ENCODE measurements at regions of chr20 and their contacts with region 1.

Region 1: GRCh38 chr20:43694763-43695162 is 27.8 kb downstream of the MYBL2 start:
- DNase-seq: no peak
- H3K4me3 ChIP-seq: no peak overlapping the region
- H3K27ac ChIP-seq: no peak overlapping the region
- H3K4me1 ChIP-seq: no peaks in the 10 kb centered on the region
- H3K27me3 ChIP-seq: no peaks in the 10 kb centered on the region
- CTCF ChIP-seq: no peak
- POLR2A ChIP-seq: no peak

Region 2: GRCh38 chr20:43416079-43416478 is 278.7 kb before region 1 on chr20:
- intact Hi-C with region 1: no loop called
- DNase-seq: no peak
- H3K4me3 ChIP-seq: no peak overlapping the region
- H3K27ac ChIP-seq: no peak overlapping the region
- H3K4me1 ChIP-seq: no peaks in the 10 kb centered on the region
- H3K27me3 ChIP-seq: no peaks in the 10 kb centered on the region
- CTCF ChIP-seq: no peak
- POLR2A ChIP-seq: no peak

Region 3: DNA sequence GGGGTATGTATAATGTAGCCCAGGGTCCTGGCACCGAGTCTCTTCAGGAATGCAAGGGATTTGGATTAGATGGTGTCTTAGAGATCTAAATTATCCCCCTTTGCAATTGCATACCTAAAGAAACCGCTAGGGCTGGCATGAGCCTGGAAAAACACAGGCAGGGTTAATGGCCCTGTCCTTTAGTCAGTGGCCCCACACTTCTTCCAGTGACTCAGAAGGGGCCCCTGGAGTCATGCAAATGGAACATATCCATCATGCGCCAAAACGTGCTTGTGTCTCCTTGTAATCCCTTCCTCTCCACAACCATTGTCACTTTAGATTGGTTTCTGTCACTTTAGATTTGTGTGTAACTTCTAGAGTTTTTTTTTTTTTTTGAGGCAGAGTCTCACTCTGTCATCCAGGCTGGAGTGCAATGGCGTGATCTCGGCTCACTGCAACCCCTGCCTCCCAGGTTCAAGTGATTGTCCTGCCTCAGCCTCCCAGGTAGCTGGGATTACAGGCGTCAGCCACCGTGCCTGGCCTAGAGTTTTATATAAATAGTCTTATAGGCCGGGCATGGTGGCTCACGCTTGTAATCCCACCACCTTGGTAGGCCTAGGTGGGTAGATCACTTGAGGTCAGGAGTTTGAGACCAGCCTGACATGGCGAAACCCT is 36.6 kb before region 1 on chr20:
- intact Hi-C with region 1: no loop called
- DNase-seq: no peak
- H3K4me3 ChIP-seq: peak overlapping the region; percentile 59 to 72 (median 69)
- H3K27ac ChIP-seq: peak overlapping the region; percentile 77 to 89
- H3K4me1 ChIP-seq: no peaks in the 10 kb centered on the region
- H3K27me3 ChIP-seq: no peaks in the 10 kb centered on the region
- CTCF ChIP-seq: no peak
- POLR2A ChIP-seq: no peak

Region 4: DNA sequence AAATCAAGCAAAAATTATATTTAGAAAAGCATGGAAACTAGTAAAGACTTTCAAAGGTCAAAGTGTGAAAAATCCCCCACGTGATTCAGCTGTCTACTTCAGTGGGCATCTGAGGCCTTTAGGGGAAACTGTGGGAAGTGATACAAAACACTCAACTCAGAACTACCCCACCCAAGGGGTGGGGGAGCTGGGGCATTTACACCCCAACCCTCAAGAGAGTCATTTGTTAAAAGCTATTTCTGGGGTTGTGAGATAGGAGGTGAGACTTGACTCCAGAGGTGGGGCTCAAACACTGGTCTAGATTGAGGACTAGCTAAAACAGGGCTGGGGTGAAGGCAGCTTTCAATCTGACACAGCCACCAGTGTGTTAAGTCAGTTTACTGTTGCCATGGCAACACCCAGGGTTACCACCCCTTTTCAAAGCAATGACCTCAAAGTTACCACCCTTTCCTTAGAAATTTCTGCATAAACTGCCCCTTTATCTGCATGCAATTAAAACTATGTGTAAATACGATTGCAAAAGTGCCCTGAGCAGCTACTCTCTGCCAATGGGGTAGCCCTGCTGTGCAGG is 41.9 kb after region 1 on chr20:
- intact Hi-C with region 1: loop called (anchors 2 kb)
- DNase-seq: no peak
- H3K4me3 ChIP-seq: no peak overlapping the region
- H3K27ac ChIP-seq: no peak overlapping the region
- H3K4me1 ChIP-seq: no peaks in the 10 kb centered on the region
- H3K27me3 ChIP-seq: peaks cover 0 to 3% of the 10 kb centered on the region in 2 donors
- CTCF ChIP-seq: no peak
- POLR2A ChIP-seq: no peak

Region 5: DNA sequence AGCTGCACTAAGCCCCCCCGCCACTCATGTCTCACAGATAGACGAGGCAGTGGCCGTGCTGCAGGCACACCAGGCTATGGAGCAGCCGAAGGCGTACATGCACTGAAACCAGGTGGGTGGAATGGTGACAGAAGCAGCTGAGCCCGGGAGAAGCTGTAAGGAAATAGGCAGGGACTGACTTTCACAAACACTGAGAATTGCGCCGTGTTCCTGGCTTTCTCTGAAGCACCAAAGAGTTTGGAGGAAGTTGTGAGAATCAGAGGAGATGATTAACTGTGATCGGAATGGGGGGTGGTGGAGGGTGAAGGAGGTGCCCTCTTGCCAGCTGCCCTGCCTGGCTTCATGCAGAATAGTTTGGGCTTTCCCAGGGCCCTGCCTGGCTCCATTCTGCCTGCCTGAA is 1243.9 kb after region 1 on chr20:
- intact Hi-C with region 1: no loop called
- DNase-seq: no peak
- H3K4me3 ChIP-seq: no peak overlapping the region
- H3K27ac ChIP-seq: peak overlapping the region in 1 of 2 donors; percentile 19
- H3K4me1 ChIP-seq: no peaks in the 10 kb centered on the region
- H3K27me3 ChIP-seq: no peaks in the 10 kb centered on the region
- CTCF ChIP-seq: no peak
- POLR2A ChIP-seq: no peak

Measured in breast epithelium (tissue), 4 donors.